Activated T-helper 1 cell treated with anti-CD3 and anti-CD28 coated beads, Interleukin-12 subunit alpha, Interleukin-12 subunit beta, Interleukin-2, Interleukin-4 antibody, amounts not matched to agents 30 ng/mL and 10 ng/mL and 1 ng/mL, durations not matched to agents 14 hours and 24 hours and 36 hours (primary cell): ENCODE measurements at regions of chr2 and their contacts with region 1.

Region 1: GRCh38 chr2:174797781-174798276 is 33.6 kb upstream of the CHRNA1 start:
- DNase-seq: no peak
- H3K4me3 Mint-ChIP-seq: no peak overlapping the region
- H3K27ac Mint-ChIP-seq: no peak overlapping the region
- H3K4me1 Mint-ChIP-seq: peaks cover 24% of the 10 kb centered on the region
- H3K27me3 Mint-ChIP-seq: peaks cover 5% of the 10 kb centered on the region

Region 2: GRCh38 chr2:174778085-174778981 is 19.5 kb before region 1 on chr2:
- intact Hi-C with region 1: loop called (anchors 1 kb)
- DNase-seq: peak; percentile 76
- H3K4me3 Mint-ChIP-seq: peak overlapping the region; percentile 58
- H3K27ac Mint-ChIP-seq: peak overlapping the region; percentile 83
- H3K4me1 Mint-ChIP-seq: peaks cover 50% of the 10 kb centered on the region
- H3K27me3 Mint-ChIP-seq: peaks cover 2% of the 10 kb centered on the region

Region 3: GRCh38 chr2:174846941-174847938 is 49.4 kb after region 1 on chr2:
- intact Hi-C with region 1: loop called (anchors 2 kb)
- DNase-seq: no peak
- H3K4me3 Mint-ChIP-seq: no peak overlapping the region
- H3K27ac Mint-ChIP-seq: no peak overlapping the region
- H3K4me1 Mint-ChIP-seq: peaks cover 20% of the 10 kb centered on the region
- H3K27me3 Mint-ChIP-seq: no peaks in the 10 kb centered on the region

Region 4: GRCh38 chr2:174901075-174901474 is 103.2 kb after region 1 on chr2:
- intact Hi-C with region 1: loop called (anchors 5 kb)
- DNase-seq: no peak
- H3K4me3 Mint-ChIP-seq: peak overlapping the region; percentile 38
- H3K27ac Mint-ChIP-seq: peak overlapping the region; percentile 49
- H3K4me1 Mint-ChIP-seq: peaks cover 20% of the 10 kb centered on the region
- H3K27me3 Mint-ChIP-seq: no peaks in the 10 kb centered on the region